Heart right ventricle (tissue), 16 donors: ENCODE measurements at regions of chr9 and their contacts with region 1.

Region 1: GRCh38 chr9:5499889-5500398 is 10.4 kb upstream of the PDCD1LG2 start:
- DNase-seq: peak in 1 of 2 donors; percentile 70
- ATAC-seq: peak; percentile 14 to 78 (median 69)
- H3K4me3 ChIP-seq: no peak overlapping the region
- H3K27ac ChIP-seq: peak overlapping the region; percentile 71 to 90 (median 82)
- H3K4me1 ChIP-seq: peaks cover 7 to 36% (median 29%) of the 10 kb centered on the region in 9 donors
- H3K27me3 ChIP-seq: no peaks in the 10 kb centered on the region
- CTCF ChIP-seq: no peak

Region 2: DNA sequence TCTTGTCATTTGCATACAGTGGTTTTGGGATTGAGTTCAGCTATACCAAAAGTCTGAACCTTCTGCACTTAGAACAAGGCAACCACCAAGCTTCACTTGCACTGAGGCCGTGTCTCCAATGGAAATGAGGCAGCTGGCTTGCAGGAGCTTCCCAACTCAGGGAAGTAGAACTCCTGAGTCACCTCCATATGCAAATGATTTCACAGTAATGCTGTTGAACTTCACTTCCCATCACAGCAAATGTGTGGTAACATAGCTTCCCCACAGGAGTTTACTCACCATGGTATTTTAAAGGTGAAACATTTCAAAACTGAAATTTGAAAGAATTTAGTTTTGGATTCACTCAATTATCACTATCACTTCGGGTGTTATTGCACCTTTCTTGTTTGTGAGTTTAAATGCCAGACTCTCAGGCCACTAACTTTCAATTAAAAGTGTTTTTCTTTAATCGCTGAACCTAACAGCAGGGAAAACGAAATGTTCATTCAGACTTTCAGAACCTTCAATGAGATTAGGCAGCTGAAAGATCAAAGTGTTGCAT is 40.6 kb before region 1 on chr9:
- intact Hi-C with region 1: loop called in 3 of 10 experiments (anchors 5 kb)
- DNase-seq: no peak
- ATAC-seq: peak in 1 of 8 donors; percentile 52
- H3K4me3 ChIP-seq: no peak overlapping the region
- H3K27ac ChIP-seq: peak overlapping the region in 1 of 10 donors; percentile 59
- H3K4me1 ChIP-seq: peaks cover 0 to 40% (median 3%) of the 10 kb centered on the region in 9 donors
- H3K27me3 ChIP-seq: no peaks in the 10 kb centered on the region
- CTCF ChIP-seq: no peak

Region 3: GRCh38 chr9:5557606-5558587 is 58.0 kb after region 1 on chr9:
- intact Hi-C with region 1: loop called in 1 of 10 experiments (anchors 5 kb)
- DNase-seq: peak in 1 of 2 donors; percentile 11
- ATAC-seq: peak; percentile 63 to 79 (median 72)
- H3K4me3 ChIP-seq: no peak overlapping the region
- H3K27ac ChIP-seq: peak overlapping the region in 9 of 10 donors; percentile 23 to 79 (median 45)
- H3K4me1 ChIP-seq: peaks cover 5 to 63% (median 18%) of the 10 kb centered on the region in 9 donors
- H3K27me3 ChIP-seq: no peaks in the 10 kb centered on the region
- CTCF ChIP-seq: no peak